Panc1 (cell line): ENCODE measurements at regions of chr20 and their contacts with region 1.

Region 1: DNA sequence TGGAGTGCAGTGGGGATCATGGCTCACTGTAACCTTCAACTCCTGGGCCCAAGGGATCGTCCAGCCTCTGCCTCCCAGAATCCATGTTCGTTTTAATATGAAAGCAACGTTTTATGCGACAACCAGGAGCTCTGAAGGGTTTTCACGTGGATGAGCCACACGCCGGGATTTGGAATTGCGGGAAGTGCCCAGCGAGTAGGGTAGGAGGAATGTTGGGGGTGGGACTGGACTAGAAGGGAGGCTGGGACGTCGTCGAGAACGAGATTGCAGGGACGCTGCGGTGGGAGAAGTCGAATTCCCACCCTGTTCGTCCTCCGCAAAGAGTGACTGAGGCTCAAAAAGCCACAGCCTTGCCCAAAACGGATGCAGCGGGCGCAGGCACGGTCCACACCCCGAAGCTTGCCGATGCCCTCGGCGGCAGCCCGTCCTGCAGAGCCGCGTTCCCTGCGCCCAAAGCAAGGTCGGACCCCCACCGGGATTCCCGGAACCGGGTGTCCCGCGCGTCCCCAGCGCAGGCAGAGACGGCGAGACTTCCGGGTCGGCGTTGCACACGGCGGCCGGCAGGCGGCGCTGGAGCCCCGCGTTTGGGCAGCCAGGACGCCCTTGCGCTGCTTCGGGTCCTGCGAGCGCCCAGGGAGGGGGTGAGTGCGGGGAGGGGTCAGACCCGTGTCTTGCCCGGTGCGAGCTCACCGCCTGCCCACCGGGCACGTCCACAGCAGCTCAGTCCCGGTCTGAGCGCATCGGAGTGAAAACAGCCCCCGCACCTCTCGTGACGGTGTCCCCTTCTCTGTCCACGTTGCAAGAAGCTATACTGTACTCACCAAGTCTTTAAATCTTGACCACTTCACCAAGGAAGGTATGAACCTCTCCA is 87.8 kb downstream of the DHX35 start:
- DNase-seq: peak; percentile 43
- ATAC-seq: peak; percentile 94
- H3K4me3 ChIP-seq: peak overlapping the region; percentile 63 to 87
- H3K27ac ChIP-seq: peak overlapping the region; percentile 77
- H3K4me1 ChIP-seq: peaks cover 5% of the 10 kb centered on the region; the same call in 1 of the 2 replicates
- H3K27me3 ChIP-seq: peaks cover 8% of the 10 kb centered on the region
- CTCF ChIP-seq: peak; percentile 99

Region 2: DNA sequence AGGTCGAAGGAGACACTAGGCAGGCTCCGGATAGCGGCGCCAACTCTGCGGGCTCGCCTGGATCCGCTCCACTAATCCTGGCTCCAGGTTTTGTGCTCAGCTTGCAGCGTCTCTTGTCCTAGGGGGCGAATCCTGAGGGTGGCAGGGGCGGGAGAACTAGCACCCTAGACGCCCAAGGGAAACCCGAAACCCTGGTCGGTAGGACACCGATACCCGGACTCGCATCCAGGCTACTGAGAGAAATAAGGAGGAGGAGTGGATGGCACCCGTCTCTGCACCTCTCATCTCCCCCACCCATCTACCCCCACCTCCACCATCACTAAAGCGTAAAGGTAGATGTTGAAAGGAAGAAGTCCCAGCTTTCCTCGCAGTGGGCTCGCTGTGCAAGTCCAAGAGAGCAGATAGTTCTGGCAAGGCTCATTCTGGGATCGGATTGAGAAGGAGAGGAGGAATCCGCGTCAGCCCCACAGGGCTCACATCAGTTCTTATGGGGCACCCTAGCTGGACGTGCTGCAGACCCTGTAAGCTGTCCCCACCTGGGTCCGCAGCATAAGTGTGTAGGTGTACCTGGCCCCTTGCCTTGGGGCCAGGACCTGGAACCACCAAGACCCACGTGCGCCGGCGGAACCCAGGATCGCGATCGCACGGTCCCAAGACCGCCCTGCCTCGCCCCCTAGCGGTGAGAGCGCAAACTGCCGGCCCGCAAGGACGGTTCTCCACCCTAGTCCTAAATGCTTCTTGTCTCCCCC is 318.8 kb before region 1 on chr20:
- CTCF ChIA-PET with region 1: interaction called, 11 read pairs
- POLR2A ChIA-PET with region 1: no interaction called
- in situ Hi-C with region 1: no loop called
- intact Hi-C with region 1: no loop called
- DNase-seq: peak; percentile 51
- ATAC-seq: peak; percentile 90
- H3K4me3 ChIP-seq: peak overlapping the region; percentile 33 to 52
- H3K27ac ChIP-seq: no peak overlapping the region
- H3K4me1 ChIP-seq: peaks cover 6% of the 10 kb centered on the region; the same call in 1 of the 2 replicates
- H3K27me3 ChIP-seq: peaks cover 41% of the 10 kb centered on the region
- CTCF ChIP-seq: peak; percentile 99

Region 3: DNA sequence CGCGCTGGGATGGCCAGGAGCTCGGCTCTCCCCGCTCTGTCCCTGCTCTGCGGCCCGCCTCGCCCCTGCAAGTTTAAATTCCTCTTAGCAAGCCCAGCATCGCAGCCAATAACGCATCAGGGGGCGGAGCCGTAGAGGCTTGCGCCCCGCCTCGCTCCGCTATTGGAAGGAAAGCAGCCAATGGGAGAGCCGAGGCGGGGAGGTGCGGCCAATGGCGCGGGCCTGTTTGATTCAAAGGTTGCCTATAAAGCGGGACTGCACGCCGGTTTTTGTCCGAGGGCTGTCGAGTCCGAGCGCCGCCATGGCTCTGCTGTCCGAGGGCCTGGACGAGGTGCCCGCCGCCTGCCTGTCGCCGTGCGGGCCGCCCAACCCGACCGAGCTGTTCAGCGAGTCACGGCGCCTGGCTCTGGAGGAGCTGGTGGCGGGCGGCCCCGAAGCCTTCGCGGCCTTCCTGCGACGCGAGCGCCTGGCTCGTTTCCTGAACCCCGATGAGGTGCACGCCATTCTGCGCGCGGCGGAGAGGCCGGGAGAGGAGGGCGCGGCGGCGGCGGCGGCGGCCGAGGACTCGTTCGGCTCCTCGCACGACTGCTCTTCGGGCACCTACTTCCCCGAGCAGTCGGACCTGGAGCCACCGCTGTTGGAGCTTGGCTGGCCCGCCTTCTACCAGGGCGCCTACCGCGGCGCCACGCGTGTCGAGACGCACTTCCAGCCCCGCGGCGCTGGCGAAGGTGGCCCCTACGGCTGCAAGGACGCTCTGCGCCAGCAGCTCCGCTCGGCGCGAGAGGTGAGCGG is 123.6 kb before region 1 on chr20 and contains the start of gene FAM83D:
- CTCF ChIA-PET with region 1: no interaction called
- POLR2A ChIA-PET with region 1: interaction called, 3 read pairs
- in situ Hi-C with region 1: no loop called
- intact Hi-C with region 1: loop called (anchors 2 kb)
- DNase-seq: peak; percentile 92
- ATAC-seq: peak; percentile 97
- H3K4me3 ChIP-seq: peak within 1 kb of the TSS; percentile 81 to 85
- H3K27ac ChIP-seq: peak within 1 kb of the TSS; percentile 89
- H3K4me1 ChIP-seq: peaks cover 12% of the 10 kb centered on the region
- H3K27me3 ChIP-seq: no peaks in the 10 kb centered on the region
- CTCF ChIP-seq: no peak; the same call in none of the 2 replicates
- total RNA-seq, gene FAM83D: 30.9 TPM

Region 4: DNA sequence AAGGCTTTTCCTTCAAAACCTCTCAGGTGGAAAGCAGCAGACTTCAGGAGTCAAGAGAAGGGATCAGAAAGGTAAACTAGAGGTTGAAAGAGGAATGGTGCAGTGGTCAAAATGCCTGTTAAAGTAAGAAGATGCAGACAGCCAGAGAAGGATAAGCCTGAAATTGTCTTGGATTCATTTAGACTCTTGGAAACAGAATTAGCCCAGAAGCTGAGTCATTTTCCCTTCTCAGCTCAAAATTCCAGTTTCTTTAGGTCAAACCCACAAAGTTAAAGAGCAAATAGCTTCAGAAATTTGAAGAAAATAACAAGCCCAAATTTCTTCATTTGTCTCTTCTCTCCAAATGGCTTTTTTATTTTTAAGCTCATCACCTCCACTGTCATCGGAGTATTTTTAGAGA is 13.9 kb before region 1 on chr20:
- CTCF ChIA-PET with region 1: interaction called, 4 read pairs
- POLR2A ChIA-PET with region 1: interaction called, 18 read pairs
- in situ Hi-C with region 1: no loop called
- intact Hi-C with region 1: no loop called
- DNase-seq: no peak
- ATAC-seq: no peak
- H3K4me3 ChIP-seq: no peak overlapping the region
- H3K27ac ChIP-seq: no peak overlapping the region
- H3K4me1 ChIP-seq: no peaks in the 10 kb centered on the region
- H3K27me3 ChIP-seq: no peaks in the 10 kb centered on the region
- CTCF ChIP-seq: no peak

Region 5: GRCh38 chr20:39081255-39081654 is 31.3 kb after region 1 on chr20:
- CTCF ChIA-PET with region 1: interaction called, 19 read pairs
- POLR2A ChIA-PET with region 1: no interaction called
- in situ Hi-C with region 1: no loop called
- intact Hi-C with region 1: loop called (anchors 1 kb)
- DNase-seq: peak; percentile 77
- ATAC-seq: peak; percentile 94
- H3K4me3 ChIP-seq: no peak overlapping the region
- H3K27ac ChIP-seq: no peak overlapping the region
- H3K4me1 ChIP-seq: no peaks in the 10 kb centered on the region
- H3K27me3 ChIP-seq: no peaks in the 10 kb centered on the region; the same call in 1 of the 2 replicates
- CTCF ChIP-seq: peak; percentile 93

Region 6: GRCh38 chr20:39605918-39606317 is 556.0 kb after region 1 on chr20:
- CTCF ChIA-PET with region 1: no interaction called
- POLR2A ChIA-PET with region 1: no interaction called
- in situ Hi-C with region 1: no loop called
- intact Hi-C with region 1: no loop called
- DNase-seq: no peak
- ATAC-seq: no peak
- H3K4me3 ChIP-seq: no peak overlapping the region
- H3K27ac ChIP-seq: no peak overlapping the region
- H3K4me1 ChIP-seq: no peaks in the 10 kb centered on the region
- H3K27me3 ChIP-seq: no peaks in the 10 kb centered on the region
- CTCF ChIP-seq: no peak